K562 (cell line): ENCODE measurements at regions of chr3 and their contacts with region 1.

Region 1: GRCh38 chr3:194089357-194090177 is 46.4 kb upstream of the HES1 start:
- DNase-seq: peak; percentile 82 to 94 (median 88)
- ATAC-seq: peak; percentile 95
- H3K4me3 ChIP-seq: no peak overlapping the region
- H3K27ac ChIP-seq: peak overlapping the region; percentile 86
- H3K4me1 ChIP-seq: peaks cover 15 to 26% of the 10 kb centered on the region in 2 experiments
- H3K27me3 ChIP-seq: no peaks in the 10 kb centered on the region
- CTCF ChIP-seq: no peak
- EP300 ChIP-seq: peak; percentile 95
- POLR2A ChIP-seq: 0 out of 2 replicates have a peak, but pooled peaks have one; percentile 51
- RAD21 ChIP-seq: peak; percentile 21 to 40; a peak in 3 of 4 replicates

Region 2: GRCh38 chr3:193592944-193593667 is 496.5 kb before region 1 on chr3 and contains the start of gene OPA1:
- CTCF ChIA-PET with region 1: no interaction called
- POLR2A ChIA-PET with region 1: no interaction called
- in situ Hi-C with region 1: no loop called
- intact Hi-C with region 1: loop called (anchors 10 kb)
- DNase-seq: peak; percentile 95 to 99 (median 96)
- ATAC-seq: peak; percentile 96
- H3K4me3 ChIP-seq: peak within 1 kb of the TSS; percentile 80
- H3K27ac ChIP-seq: peak within 1 kb of the TSS; percentile 84
- H3K4me1 ChIP-seq: peaks cover 5 to 22% of the 10 kb centered on the region in 2 experiments; a peak in 4 of 5 replicates
- H3K27me3 ChIP-seq: no peaks in the 10 kb centered on the region
- CTCF ChIP-seq: peak; percentile 0 to 39 (median 39); a peak in 3 of 6 replicates
- EP300 ChIP-seq: peak; percentile 58
- POLR2A ChIP-seq: peak; percentile 90
- RAD21 ChIP-seq: no peak
- polyA plus RNA-seq, gene OPA1: 19.7 to 30.8 TPM

Region 3: DNA sequence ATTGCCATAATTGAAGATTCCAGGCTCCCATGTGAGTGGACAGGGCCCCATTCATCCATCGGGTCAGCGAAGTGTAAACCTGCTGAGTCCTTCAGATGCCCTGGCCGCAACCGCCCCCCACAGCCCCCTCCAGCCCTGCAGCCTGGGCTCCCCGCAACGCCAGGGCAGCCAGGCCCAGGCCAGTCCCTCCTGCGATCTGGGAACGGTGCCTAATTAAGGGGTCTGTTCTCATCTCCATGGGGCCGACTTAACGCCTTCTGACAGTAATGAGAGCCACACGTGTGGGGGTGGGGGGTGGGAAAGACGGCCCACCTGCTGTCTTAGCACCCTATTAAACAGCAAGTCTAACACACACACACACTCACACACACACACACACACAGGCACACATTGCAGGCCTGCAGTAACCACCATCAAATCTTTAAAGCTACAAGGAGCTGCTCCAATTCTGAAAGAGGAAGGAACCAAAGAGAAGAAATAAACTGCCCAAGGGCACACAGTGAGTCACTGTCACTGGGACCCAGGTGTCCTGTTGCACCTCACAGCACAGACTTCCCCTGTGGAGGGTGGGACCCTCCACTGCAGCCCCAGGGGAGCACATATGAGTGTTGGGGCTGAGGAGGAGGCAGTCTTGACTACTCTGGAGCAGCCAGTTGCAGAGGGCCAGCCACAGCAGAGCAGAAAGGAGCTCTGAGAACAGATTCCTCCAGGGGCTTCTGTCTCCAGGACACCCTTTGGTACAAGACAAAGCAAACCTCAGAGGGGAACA is 14.6 kb after region 1 on chr3:
- CTCF ChIA-PET with region 1: no interaction called
- POLR2A ChIA-PET with region 1: interaction called, 23 read pairs
- in situ Hi-C with region 1: no loop called
- intact Hi-C with region 1: no loop called
- DNase-seq: no peak
- ATAC-seq: no peak
- H3K4me3 ChIP-seq: no peak overlapping the region
- H3K27ac ChIP-seq: no peak overlapping the region
- H3K4me1 ChIP-seq: peaks cover 0 to 3% of the 10 kb centered on the region in 2 experiments; a peak in 2 of 5 replicates
- H3K27me3 ChIP-seq: no peaks in the 10 kb centered on the region
- CTCF ChIP-seq: no peak
- EP300 ChIP-seq: no peak
- POLR2A ChIP-seq: no peak
- RAD21 ChIP-seq: no peak

Region 4: DNA sequence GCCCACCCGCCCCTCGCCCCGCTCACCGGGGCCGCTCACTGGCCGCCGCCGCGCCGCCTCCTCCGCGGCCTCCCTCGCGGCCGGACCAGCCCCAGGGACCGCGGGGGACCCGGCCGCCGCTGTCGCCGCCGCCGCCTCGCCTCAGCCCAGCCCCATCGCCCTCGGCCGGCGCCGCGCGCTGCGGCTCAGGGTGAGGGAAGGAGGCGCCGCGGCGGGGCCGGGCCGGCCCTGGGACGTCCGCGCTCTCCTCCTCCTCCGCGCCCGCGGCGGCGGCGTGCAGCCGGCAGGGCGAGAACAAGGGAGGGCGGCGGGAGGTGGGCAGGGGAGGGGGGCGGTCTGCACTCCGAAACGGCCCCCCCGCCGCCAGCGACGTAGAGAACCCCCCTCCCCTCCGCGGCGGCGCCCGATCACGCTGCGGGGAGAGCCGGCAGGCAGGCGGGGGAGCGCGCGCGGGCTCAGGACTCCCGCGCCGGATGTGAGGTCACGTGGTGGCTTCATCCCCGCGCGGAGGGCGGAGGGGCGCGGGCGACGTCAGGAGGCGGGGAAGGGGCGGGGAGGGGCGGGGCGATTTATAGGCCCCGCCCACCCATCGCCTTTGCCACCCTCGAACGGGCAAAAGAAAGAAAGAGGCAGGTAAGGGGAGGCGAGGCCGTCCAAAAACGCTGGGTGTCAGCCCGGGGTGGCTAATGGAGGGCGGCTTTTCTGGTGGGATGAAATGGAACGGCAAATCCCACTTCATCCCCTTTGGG is 397.1 kb after region 1 on chr3 and contains the start of gene ATP13A3:
- CTCF ChIA-PET with region 1: no interaction called
- POLR2A ChIA-PET with region 1: no interaction called
- in situ Hi-C with region 1: no loop called
- intact Hi-C with region 1: loop called (anchors 10 kb)
- DNase-seq: peak; percentile 92 to 97 (median 96)
- ATAC-seq: peak; percentile 84
- H3K4me3 ChIP-seq: peak within 1 kb of the TSS; percentile 66
- H3K27ac ChIP-seq: peak within 1 kb of the TSS; percentile 93
- H3K4me1 ChIP-seq: peaks cover 48 to 60% of the 10 kb centered on the region in 2 experiments
- H3K27me3 ChIP-seq: no peaks in the 10 kb centered on the region
- CTCF ChIP-seq: no peak
- EP300 ChIP-seq: no peak
- POLR2A ChIP-seq: peak; percentile 70
- RAD21 ChIP-seq: no peak
- polyA plus RNA-seq, gene ATP13A3: 16.6 to 16.8 TPM